ENCODE measurements at regions of chr6 and their contacts with region 1.

Region 1: GRCh38 chr6:26031595-26032339 is 55.5 kb upstream of the HFE start:
- DNase-seq: peak; percentile 96
- H3K4me3 Mint-ChIP-seq: peak overlapping the region; percentile 86
- H3K27ac Mint-ChIP-seq: peak overlapping the region; percentile 97
- H3K4me1 Mint-ChIP-seq: peaks cover 33% of the 10 kb centered on the region
- H3K27me3 Mint-ChIP-seq: no peaks in the 10 kb centered on the region

Region 2: DNA sequence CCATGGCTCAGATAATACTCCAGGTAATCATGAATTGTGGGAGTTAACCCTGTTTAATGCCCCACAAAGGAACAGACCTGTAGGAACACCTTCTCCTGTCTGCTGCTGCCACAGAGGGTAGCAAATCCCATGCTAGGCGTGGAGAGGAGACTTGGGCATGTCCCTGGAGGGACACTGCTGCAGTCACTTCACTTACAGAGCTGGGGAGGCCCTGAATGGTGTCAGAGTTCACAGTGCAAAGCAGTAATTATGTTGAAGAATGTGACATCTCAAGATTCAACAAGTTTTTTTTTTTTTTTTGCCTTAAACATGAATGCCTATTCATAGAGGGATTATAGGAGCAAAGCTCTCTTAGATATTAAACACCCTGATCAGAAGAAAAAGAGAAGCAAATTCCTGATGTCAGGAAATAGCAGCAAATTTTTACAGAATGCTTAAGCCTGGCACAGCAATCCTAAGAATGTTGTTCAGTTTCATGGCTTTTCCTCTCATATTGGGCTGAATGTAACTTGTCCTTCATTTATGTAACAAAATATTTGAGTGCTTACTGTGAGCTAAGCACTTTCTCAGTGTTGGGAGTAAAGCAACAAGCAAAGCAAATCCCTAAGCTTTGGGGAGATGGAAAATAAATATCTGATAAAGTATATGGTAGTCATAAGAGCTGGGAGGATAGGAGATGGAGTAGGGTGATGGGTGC is 707.6 kb before region 1 on chr6:
- CTCF ChIA-PET with region 1: no interaction called
- intact Hi-C with region 1: no loop called
- DNase-seq: no peak
- H3K4me3 Mint-ChIP-seq: no peak overlapping the region
- H3K27ac Mint-ChIP-seq: no peak overlapping the region
- H3K4me1 Mint-ChIP-seq: no peaks in the 10 kb centered on the region
- H3K27me3 Mint-ChIP-seq: no peaks in the 10 kb centered on the region

Region 3: GRCh38 chr6:26045065-26045927 is 13.5 kb after region 1 on chr6:
- CTCF ChIA-PET with region 1: interaction called, 15 read pairs
- intact Hi-C with region 1: loop called (anchors 1 kb)
- DNase-seq: peak; percentile 84
- H3K4me3 Mint-ChIP-seq: peak overlapping the region; percentile 83
- H3K27ac Mint-ChIP-seq: peak overlapping the region; percentile 99
- H3K4me1 Mint-ChIP-seq: peaks cover 13% of the 10 kb centered on the region
- H3K27me3 Mint-ChIP-seq: no peaks in the 10 kb centered on the region

Region 4: GRCh38 chr6:26054857-26055669 is 23.3 kb after region 1 on chr6:
- CTCF ChIA-PET with region 1: interaction called, 4 read pairs
- intact Hi-C with region 1: loop called (anchors 1 kb)
- DNase-seq: peak; percentile 95
- H3K4me3 Mint-ChIP-seq: peak overlapping the region; percentile 97
- H3K27ac Mint-ChIP-seq: peak overlapping the region; percentile 100
- H3K4me1 Mint-ChIP-seq: peaks cover 18% of the 10 kb centered on the region
- H3K27me3 Mint-ChIP-seq: peaks cover 11% of the 10 kb centered on the region

Region 5: GRCh38 chr6:26103770-26104456 is 72.1 kb after region 1 on chr6:
- CTCF ChIA-PET with region 1: no interaction called
- intact Hi-C with region 1: loop called (anchors 1 kb)
- DNase-seq: peak; percentile 87
- H3K4me3 Mint-ChIP-seq: peak overlapping the region; percentile 80
- H3K27ac Mint-ChIP-seq: peak overlapping the region; percentile 94
- H3K4me1 Mint-ChIP-seq: peaks cover 18% of the 10 kb centered on the region
- H3K27me3 Mint-ChIP-seq: peaks cover 2% of the 10 kb centered on the region

Region 6: DNA sequence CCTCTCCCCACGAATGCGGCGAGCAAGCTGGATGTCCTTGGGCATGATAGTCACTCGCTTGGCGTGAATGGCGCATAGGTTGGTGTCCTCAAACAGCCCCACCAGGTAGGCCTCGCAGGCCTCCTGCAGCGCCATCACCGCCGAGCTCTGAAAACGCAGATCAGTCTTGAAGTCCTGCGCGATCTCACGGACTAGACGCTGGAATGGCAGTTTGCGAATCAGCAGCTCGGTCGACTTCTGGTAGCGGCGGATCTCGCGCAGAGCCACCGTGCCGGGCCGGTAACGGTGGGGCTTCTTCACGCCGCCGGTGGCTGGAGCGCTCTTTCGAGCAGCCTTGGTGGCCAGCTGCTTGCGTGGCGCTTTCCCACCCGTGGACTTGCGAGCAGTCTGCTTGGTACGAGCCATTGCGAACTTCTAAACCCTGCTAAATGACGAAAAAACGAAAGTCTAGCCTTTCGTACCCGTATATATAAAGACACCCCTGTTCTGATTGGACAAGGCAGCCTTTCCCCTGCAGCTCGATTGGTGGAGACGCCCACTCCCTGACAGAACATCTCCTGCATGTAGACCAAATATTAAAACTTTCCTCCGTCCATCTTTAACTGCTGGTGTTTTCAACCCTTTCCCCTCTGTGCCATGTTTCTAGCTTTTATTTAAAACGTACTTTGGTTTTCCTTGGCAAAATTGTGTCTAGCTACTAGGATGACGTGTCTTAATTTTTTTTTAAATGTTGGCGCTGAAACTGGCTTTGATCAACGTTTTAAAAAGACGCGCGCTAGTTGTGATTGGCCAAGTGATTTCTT is 165.3 kb after region 1 on chr6:
- CTCF ChIA-PET with region 1: no interaction called
- intact Hi-C with region 1: loop called (anchors 2 kb)
- DNase-seq: peak; percentile 86
- H3K4me3 Mint-ChIP-seq: peak overlapping the region; percentile 96
- H3K27ac Mint-ChIP-seq: peak overlapping the region; percentile 99
- H3K4me1 Mint-ChIP-seq: peaks cover 36% of the 10 kb centered on the region
- H3K27me3 Mint-ChIP-seq: peaks cover 5% of the 10 kb centered on the region

Region 7: DNA sequence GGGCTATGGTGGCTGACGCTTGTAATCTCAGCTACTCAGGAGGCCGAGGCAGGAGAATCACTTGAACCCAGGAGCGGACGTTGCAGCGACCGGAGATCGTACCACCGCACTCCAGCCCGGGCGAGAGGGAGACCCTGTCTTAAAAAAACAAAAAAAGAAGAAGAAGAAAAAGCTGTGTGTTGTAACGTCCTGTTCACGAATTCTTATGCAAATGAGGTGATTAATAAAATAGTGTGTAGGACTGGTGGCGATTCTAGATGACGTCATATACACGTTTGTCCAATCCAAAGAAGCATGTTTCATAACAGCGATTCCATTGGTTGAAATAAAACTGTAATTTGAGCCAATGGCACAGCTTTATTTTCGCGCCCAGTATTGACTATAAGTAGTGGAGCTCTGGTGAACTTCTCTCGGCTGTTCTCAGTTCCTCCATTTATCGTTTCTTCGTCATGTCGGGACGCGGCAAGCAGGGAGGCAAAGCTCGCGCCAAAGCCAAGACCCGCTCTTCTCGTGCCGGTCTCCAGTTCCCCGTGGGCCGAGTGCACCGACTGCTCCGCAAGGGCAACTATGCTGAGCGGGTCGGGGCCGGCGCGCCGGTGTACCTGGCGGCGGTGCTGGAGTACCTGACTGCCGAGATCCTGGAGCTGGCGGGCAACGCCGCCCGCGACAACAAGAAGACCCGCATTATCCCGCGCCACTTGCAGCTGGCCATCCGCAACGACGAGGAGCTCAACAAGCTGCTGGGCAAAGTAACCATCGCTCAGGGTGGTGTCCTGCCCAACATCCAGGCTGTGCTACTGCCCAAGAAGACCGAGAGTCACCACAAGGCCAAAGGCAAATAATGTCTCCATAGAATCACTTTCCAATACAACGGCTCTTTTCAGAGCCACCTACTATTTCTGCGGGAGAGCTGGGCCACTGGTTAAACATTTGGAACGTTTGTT is 1833.4 kb after region 1 on chr6:
- CTCF ChIA-PET with region 1: no interaction called
- intact Hi-C with region 1: loop called (anchors 5 kb)
- DNase-seq: peak; percentile 84
- H3K4me3 Mint-ChIP-seq: peak overlapping the region; percentile 97
- H3K27ac Mint-ChIP-seq: peak overlapping the region; percentile 96
- H3K4me1 Mint-ChIP-seq: peaks cover 26% of the 10 kb centered on the region
- H3K27me3 Mint-ChIP-seq: peaks cover 8% of the 10 kb centered on the region